HepG2 (cell line): ENCODE measurements at regions of chr17 and their contacts with region 1.

Region 1: GRCh38 chr17:44014437-44015172 is at the start of gene TMEM101:
- DNase-seq: peak; percentile 92
- ATAC-seq: peak; percentile 91
- H3K4me3 ChIP-seq: peak within 1 kb of the TSS; percentile 92 to 98 (median 93)
- H3K27ac ChIP-seq: peak within 1 kb of the TSS; percentile 88
- H3K4me1 ChIP-seq: peaks cover 40% of the 10 kb centered on the region
- H3K27me3 ChIP-seq: no peaks in the 10 kb centered on the region; a peak in 1 of 5 replicates
- CTCF ChIP-seq: peak; percentile 50
- EP300 ChIP-seq: peak; percentile 45 to 70; a peak in 2 of 4 replicates
- POLR2A ChIP-seq: peak; percentile 84 to 89
- RAD21 ChIP-seq: no peak; the same call in none of the 2 replicates
- total RNA-seq, gene TMEM101: 50.0 and 72.0 TPM in 2 replicates

Region 2: DNA sequence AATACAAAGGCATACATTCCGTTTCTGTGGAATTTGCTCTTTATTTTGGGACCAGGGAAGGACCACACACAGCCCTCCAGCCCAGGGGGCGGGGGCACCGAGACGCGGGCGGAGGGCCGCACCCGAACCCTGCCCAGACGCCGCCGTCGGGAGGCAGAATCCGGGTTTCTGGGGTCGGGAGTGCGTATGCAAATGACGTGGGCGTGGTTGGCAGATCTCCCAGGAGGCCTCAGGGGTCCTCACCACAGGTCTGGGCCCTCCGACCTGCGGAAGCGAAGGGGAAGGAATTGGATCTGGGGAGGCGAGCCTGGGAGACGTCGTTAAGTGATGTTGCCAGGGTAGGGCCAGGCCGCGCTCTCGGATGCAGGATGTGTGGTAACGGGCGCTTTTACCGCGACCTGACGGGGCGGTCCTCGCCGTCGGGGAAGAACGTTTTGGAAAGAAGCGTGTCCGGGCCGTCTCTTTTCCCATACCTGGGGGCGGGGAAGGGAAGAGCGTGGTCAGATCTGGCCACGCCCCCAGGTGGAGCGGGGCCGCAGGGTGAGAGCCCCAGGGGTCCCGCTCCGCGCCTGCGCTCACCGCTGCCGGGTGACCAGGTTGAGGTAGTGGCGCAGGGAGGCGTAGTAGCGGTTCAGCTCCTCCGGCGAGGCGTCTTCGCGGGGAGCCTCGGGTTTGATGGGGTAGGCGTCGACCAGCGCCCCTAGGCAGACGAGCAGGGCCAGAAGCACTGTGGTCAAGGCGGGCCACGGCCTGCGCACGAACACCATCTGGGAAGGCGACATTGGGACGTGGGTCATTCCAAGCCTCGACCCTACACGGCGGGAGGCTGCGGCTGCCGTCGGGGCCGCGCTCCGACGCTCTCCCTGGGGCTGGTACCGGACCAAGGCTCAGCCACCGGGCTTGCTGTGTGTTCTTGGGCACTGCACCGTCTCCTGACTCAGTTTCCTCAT is 61.6 kb before region 1 on chr17:
- CTCF ChIA-PET with region 1: no interaction called
- POLR2A ChIA-PET with region 1: no interaction called
- in situ Hi-C with region 1: no loop called
- intact Hi-C with region 1: no loop called
- DNase-seq: no peak
- ATAC-seq: peak; percentile 12
- H3K4me3 ChIP-seq: peak overlapping the region in 1 of 3 experiments; percentile 30; a peak in 1 of 6 replicates
- H3K27ac ChIP-seq: no peak overlapping the region
- H3K4me1 ChIP-seq: peaks cover 14% of the 10 kb centered on the region
- H3K27me3 ChIP-seq: peaks cover 26 to 86% of the 10 kb centered on the region in 2 experiments
- CTCF ChIP-seq: no peak
- EP300 ChIP-seq: no peak
- POLR2A ChIP-seq: no peak
- RAD21 ChIP-seq: no peak

Region 3: GRCh38 chr17:43966271-43966670 is 48.3 kb before region 1 on chr17:
- CTCF ChIA-PET with region 1: no interaction called
- POLR2A ChIA-PET with region 1: no interaction called
- in situ Hi-C with region 1: no loop called
- intact Hi-C with region 1: no loop called
- DNase-seq: no peak
- ATAC-seq: no peak
- H3K4me3 ChIP-seq: no peak overlapping the region
- H3K27ac ChIP-seq: no peak overlapping the region
- H3K4me1 ChIP-seq: peaks cover 38% of the 10 kb centered on the region
- H3K27me3 ChIP-seq: peaks cover 5 to 45% of the 10 kb centered on the region in 2 experiments
- CTCF ChIP-seq: no peak
- EP300 ChIP-seq: no peak
- POLR2A ChIP-seq: no peak
- RAD21 ChIP-seq: no peak

Region 4: DNA sequence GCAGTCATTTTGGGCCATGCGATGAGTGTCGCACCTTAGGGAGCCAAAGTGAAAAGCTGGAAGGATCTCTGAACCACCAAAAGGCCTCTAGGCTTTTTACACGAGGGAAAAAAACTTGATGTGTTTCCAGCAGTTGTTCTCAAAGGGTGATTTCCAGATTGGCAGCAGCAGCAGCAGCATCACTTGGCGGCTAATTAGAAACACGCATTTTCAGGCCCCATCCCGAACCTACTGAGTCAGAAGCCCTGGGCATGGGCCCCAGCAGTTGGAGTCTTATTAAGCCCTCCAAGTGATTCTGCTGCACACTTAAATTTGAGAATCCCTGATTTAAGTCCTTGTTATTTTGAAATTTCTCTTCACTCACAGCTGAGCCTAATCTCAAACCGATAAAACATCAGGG is 35.6 kb before region 1 on chr17:
- CTCF ChIA-PET with region 1: no interaction called
- POLR2A ChIA-PET with region 1: no interaction called
- in situ Hi-C with region 1: no loop called
- intact Hi-C with region 1: no loop called
- DNase-seq: no peak
- ATAC-seq: no peak
- H3K4me3 ChIP-seq: no peak overlapping the region
- H3K27ac ChIP-seq: no peak overlapping the region
- H3K4me1 ChIP-seq: peaks cover 35% of the 10 kb centered on the region
- H3K27me3 ChIP-seq: peaks cover 9 to 65% of the 10 kb centered on the region in 2 experiments
- CTCF ChIP-seq: no peak
- EP300 ChIP-seq: no peak
- POLR2A ChIP-seq: no peak
- RAD21 ChIP-seq: no peak

Region 5: GRCh38 chr17:44000141-44000860 is 14.3 kb before region 1 on chr17:
- CTCF ChIA-PET with region 1: no interaction called
- POLR2A ChIA-PET with region 1: interaction called, 39 read pairs
- in situ Hi-C with region 1: no loop called
- intact Hi-C with region 1: loop called (anchors 2 kb)
- DNase-seq: no peak
- ATAC-seq: no peak
- H3K4me3 ChIP-seq: no peak overlapping the region
- H3K27ac ChIP-seq: no peak overlapping the region
- H3K4me1 ChIP-seq: peaks cover 70% of the 10 kb centered on the region
- H3K27me3 ChIP-seq: peaks cover 0 to 7% of the 10 kb centered on the region in 2 experiments; a peak in 3 of 5 replicates
- CTCF ChIP-seq: no peak
- EP300 ChIP-seq: no peak
- POLR2A ChIP-seq: no peak
- RAD21 ChIP-seq: no peak

Region 6: GRCh38 chr17:44053125-44053872 is 38.7 kb after region 1 on chr17:
- CTCF ChIA-PET with region 1: no interaction called
- POLR2A ChIA-PET with region 1: no interaction called
- in situ Hi-C with region 1: no loop called
- intact Hi-C with region 1: no loop called
- DNase-seq: no peak
- ATAC-seq: peak; percentile 38; the same call in 2 of the 3 replicates
- H3K4me3 ChIP-seq: no peak overlapping the region
- H3K27ac ChIP-seq: no peak overlapping the region
- H3K4me1 ChIP-seq: 0 out of 2 replicates have a peak, but pooled peaks cover 14% of the 10 kb centered on the region
- H3K27me3 ChIP-seq: no peaks in the 10 kb centered on the region
- CTCF ChIP-seq: no peak
- EP300 ChIP-seq: no peak
- POLR2A ChIP-seq: no peak
- RAD21 ChIP-seq: no peak